ENCODE measurements at regions of chr2 and their contacts with region 1.

Region 1: DNA sequence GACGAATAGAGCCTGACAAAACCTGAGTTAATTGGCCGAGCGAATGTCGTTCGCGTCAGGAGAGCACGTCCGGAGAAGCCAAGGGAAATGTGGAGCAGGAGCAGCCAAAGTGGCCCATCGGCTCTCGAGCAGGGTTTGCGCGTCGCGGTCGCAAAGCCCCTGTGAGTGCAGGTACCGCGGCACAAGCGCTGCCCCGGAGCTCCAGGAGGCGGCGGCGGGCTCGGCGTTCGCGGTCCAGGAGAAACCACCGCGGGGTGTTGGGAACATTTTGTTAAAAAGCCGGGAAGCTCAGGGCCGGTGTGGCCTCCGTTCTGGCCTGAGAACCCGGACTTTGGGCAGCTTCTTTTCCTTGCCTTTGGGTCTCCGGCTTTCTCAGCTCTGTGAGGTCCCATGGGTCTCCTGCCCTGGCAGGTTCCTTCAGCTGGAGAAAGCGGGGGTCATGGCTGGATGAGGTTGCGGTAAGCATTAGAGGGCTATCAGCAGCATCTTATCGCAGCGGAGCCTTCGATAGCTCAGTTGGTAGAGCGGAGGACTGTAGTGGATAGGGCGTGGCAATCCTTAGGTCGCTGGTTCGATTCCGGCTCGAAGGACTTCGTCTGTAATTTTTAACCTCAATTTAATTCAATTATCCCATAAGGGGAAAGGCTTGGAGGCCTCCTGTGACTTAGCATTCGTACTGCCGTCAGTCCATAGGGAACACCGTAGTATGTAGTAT is 1.0 kb upstream of the AGBL5 start:
- DNase-seq: peak; percentile 77 to 95 (median 94)
- ATAC-seq: peak; percentile 76
- H3K4me3 ChIP-seq: peak overlapping the region; percentile 99
- H3K4me3 Mint-ChIP-seq: peak overlapping the region; percentile 86 to 100 (median 99)
- H3K27ac ChIP-seq: peak overlapping the region; percentile 84
- H3K27ac Mint-ChIP-seq: peak overlapping the region; percentile 96 to 100 (median 100)
- H3K4me1 ChIP-seq: peaks cover 8 to 15% of the 10 kb centered on the region in 2 donors
- H3K4me1 Mint-ChIP-seq: peaks cover 10 to 34% (median 19%) of the 10 kb centered on the region in 7 donors
- H3K27me3 ChIP-seq: no peaks in the 10 kb centered on the region
- H3K27me3 Mint-ChIP-seq: peaks cover 0 to 8% (median 4%) of the 10 kb centered on the region in 5 donors

Region 2: GRCh38 chr2:26764078-26764887 is 286.2 kb before region 1 on chr2 and contains the start of gene SLC35F6:
- CTCF ChIA-PET with region 1: interaction called, 3 read pairs
- POLR2A ChIA-PET with region 1: no interaction called
- intact Hi-C with region 1: loop called in 1 of 2 experiments (anchors 2 kb)
- DNase-seq: peak; percentile 70 to 90 (median 86)
- ATAC-seq: peak; percentile 95
- H3K4me3 ChIP-seq: peak within 1 kb of the TSS; percentile 92
- H3K4me3 Mint-ChIP-seq: peak within 1 kb of the TSS; percentile 85 to 97 (median 94)
- H3K27ac ChIP-seq: peak within 1 kb of the TSS; percentile 82
- H3K27ac Mint-ChIP-seq: peak within 1 kb of the TSS; percentile 62 to 97 (median 91)
- H3K4me1 ChIP-seq: peaks cover 23% of the 10 kb centered on the region in 2 donors
- H3K4me1 Mint-ChIP-seq: peaks cover 28 to 54% (median 39%) of the 10 kb centered on the region in 7 donors
- H3K27me3 ChIP-seq: no peaks in the 10 kb centered on the region
- H3K27me3 Mint-ChIP-seq: peaks cover 0 to 6% (median 0%) of the 10 kb centered on the region in 5 donors
- total RNA-seq, gene SLC35F6: 17.3 to 22.5 (median 19.9) TPM

Region 3: GRCh38 chr2:26970244-26970920 is 80.1 kb before region 1 on chr2 and contains the start of gene MAPRE3:
- CTCF ChIA-PET with region 1: no interaction called
- POLR2A ChIA-PET with region 1: interaction called, 7 read pairs
- intact Hi-C with region 1: loop called in 1 of 2 experiments (anchors 1 kb)
- DNase-seq: peak; percentile 71 to 93 (median 78)
- ATAC-seq: peak; percentile 93
- H3K4me3 ChIP-seq: peak within 1 kb of the TSS; percentile 89
- H3K4me3 Mint-ChIP-seq: peak within 1 kb of the TSS; percentile 83 to 97 (median 92)
- H3K27ac ChIP-seq: peak within 1 kb of the TSS; percentile 61
- H3K27ac Mint-ChIP-seq: peak within 1 kb of the TSS; percentile 56 to 96 (median 74)
- H3K4me1 ChIP-seq: peaks cover 0 to 12% of the 10 kb centered on the region in 2 donors
- H3K4me1 Mint-ChIP-seq: peaks cover 11 to 36% (median 25%) of the 10 kb centered on the region in 7 donors
- H3K27me3 ChIP-seq: no peaks in the 10 kb centered on the region
- H3K27me3 Mint-ChIP-seq: peaks cover 7 to 68% (median 13%) of the 10 kb centered on the region in 5 donors
- total RNA-seq, gene MAPRE3: 1.8 to 6.0 (median 4.5) TPM

Region 4: DNA sequence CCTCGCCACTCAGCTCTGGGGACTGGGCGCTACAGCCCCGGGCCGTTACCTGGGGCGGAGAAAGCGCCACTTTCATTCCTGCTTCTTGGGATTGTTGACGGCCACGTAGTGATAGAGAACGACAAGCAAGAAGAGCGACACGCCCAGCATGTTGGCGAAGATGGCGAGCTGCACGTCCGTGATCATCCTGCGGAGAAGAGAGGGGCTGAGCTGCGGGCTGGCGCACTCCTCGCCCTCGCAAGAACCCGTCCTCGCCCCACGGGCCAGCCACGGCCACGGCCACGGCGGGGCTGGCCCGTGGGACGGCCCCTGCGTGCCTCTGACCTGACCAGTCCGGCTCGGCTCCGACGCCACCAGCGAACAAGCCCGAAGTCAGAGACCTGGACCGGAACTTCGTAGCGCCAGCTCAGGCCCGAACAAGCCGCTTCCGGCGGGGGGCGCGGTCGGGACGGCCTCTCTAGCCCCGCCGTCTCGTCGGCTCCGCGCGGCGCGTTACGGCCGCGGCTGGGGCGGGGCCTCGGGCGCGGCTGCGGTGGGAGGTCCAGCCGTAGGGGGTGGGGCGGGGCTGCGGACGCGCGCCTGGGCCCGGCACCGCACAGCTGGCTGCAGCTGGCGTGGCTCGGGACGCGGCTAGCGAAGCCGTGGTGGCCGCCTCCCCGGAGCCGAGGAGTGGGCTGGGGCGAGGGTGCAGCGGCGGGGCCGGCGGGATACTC is 21.0 kb after region 1 on chr2 and contains the start of gene OST4:
- CTCF ChIA-PET with region 1: interaction called, 4 read pairs
- POLR2A ChIA-PET with region 1: interaction called, 216 read pairs
- intact Hi-C with region 1: loop called (anchors 1 kb)
- DNase-seq: peak; percentile 81 to 97 (median 87)
- ATAC-seq: peak; percentile 96
- H3K4me3 ChIP-seq: peak within 1 kb of the TSS; percentile 83
- H3K4me3 Mint-ChIP-seq: peak within 1 kb of the TSS; percentile 96 to 99 (median 97)
- H3K27ac ChIP-seq: peak within 1 kb of the TSS; percentile 97
- H3K27ac Mint-ChIP-seq: peak within 1 kb of the TSS; percentile 93 to 98 (median 97)
- H3K4me1 ChIP-seq: peaks cover 29 to 41% of the 10 kb centered on the region in 2 donors
- H3K4me1 Mint-ChIP-seq: peaks cover 57 to 86% (median 76%) of the 10 kb centered on the region in 7 donors
- H3K27me3 ChIP-seq: no peaks in the 10 kb centered on the region
- H3K27me3 Mint-ChIP-seq: no peaks in the 10 kb centered on the region
- total RNA-seq, gene OST4: 241 to 398 (median 263) TPM

Region 5: GRCh38 chr2:27123302-27124231 is 73.1 kb after region 1 on chr2 and contains the start of gene ABHD1:
- CTCF ChIA-PET with region 1: interaction called, 3 read pairs
- POLR2A ChIA-PET with region 1: no interaction called
- intact Hi-C with region 1: loop called in 1 of 2 experiments (anchors 2 kb)
- DNase-seq: peak; percentile 37 to 79 (median 51)
- ATAC-seq: peak; percentile 84
- H3K4me3 ChIP-seq: peak within 1 kb of the TSS; percentile 59
- H3K4me3 Mint-ChIP-seq: peak within 1 kb of the TSS; percentile 83 to 95 (median 92)
- H3K27ac ChIP-seq: peak within 1 kb of the TSS; percentile 61
- H3K27ac Mint-ChIP-seq: peak within 1 kb of the TSS; percentile 78 to 89 (median 86)
- H3K4me1 ChIP-seq: peaks cover 5 to 11% of the 10 kb centered on the region in 2 donors
- H3K4me1 Mint-ChIP-seq: peaks cover 10 to 30% (median 20%) of the 10 kb centered on the region in 7 donors
- H3K27me3 ChIP-seq: peaks cover 0 to 3% of the 10 kb centered on the region in 2 donors
- H3K27me3 Mint-ChIP-seq: peaks cover 11 to 40% (median 14%) of the 10 kb centered on the region in 5 donors
- total RNA-seq, gene ABHD1: 0.53 to 2.0 (median 1.5) TPM

Region 6: GRCh38 chr2:27217217-27218121 is 167.0 kb after region 1 on chr2 and contains the start of gene CAD:
- CTCF ChIA-PET with region 1: no interaction called
- POLR2A ChIA-PET with region 1: interaction called, 5 read pairs
- intact Hi-C with region 1: loop called (anchors 1 kb)
- DNase-seq: peak; percentile 71 to 90 (median 80)
- ATAC-seq: peak; percentile 87
- H3K4me3 ChIP-seq: peak within 1 kb of the TSS; percentile 68
- H3K4me3 Mint-ChIP-seq: peak within 1 kb of the TSS; percentile 90 to 98 (median 96)
- H3K27ac ChIP-seq: peak within 1 kb of the TSS; percentile 85
- H3K27ac Mint-ChIP-seq: peak within 1 kb of the TSS; percentile 86 to 96 (median 94)
- H3K4me1 ChIP-seq: peaks cover 19 to 24% of the 10 kb centered on the region in 2 donors
- H3K4me1 Mint-ChIP-seq: peaks cover 26 to 52% (median 45%) of the 10 kb centered on the region in 7 donors
- H3K27me3 ChIP-seq: no peaks in the 10 kb centered on the region
- H3K27me3 Mint-ChIP-seq: no peaks in the 10 kb centered on the region
- total RNA-seq, gene CAD: 34.4 to 65.7 (median 45.4) TPM